SK-N-SH (cell line): ENCODE measurements at regions of chr13 and their contacts with region 1.

Region 1: GRCh38 chr13:40777166-40777808 is 6.3 kb upstream of the MRPS31 start:
- DNase-seq: peak; percentile 60
- H3K4me3 ChIP-seq: peak overlapping the region; percentile 24 to 48
- H3K27ac ChIP-seq: peak overlapping the region; percentile 40 to 63; a peak in 3 of 4 replicates
- H3K4me1 ChIP-seq: peaks cover 3 to 8% of the 10 kb centered on the region in 2 experiments; a peak in 1 of 4 replicates
- H3K27me3 ChIP-seq: no peaks in the 10 kb centered on the region
- CTCF ChIP-seq: peak; percentile 82
- EP300 ChIP-seq: no peak
- RAD21 ChIP-seq: peak; percentile 71

Region 2: GRCh38 chr13:39684531-39685137 is 1092.7 kb before region 1 on chr13:
- CTCF ChIA-PET with region 1: interaction called, 17 read pairs
- POLR2A ChIA-PET with region 1: no interaction called
- DNase-seq: peak; percentile 23
- H3K4me3 ChIP-seq: no peak overlapping the region
- H3K27ac ChIP-seq: no peak overlapping the region
- H3K4me1 ChIP-seq: no peaks in the 10 kb centered on the region; a peak in 1 of 4 replicates
- H3K27me3 ChIP-seq: no peaks in the 10 kb centered on the region
- CTCF ChIP-seq: peak; percentile 67
- EP300 ChIP-seq: no peak
- RAD21 ChIP-seq: peak; percentile 52

Region 3: DNA sequence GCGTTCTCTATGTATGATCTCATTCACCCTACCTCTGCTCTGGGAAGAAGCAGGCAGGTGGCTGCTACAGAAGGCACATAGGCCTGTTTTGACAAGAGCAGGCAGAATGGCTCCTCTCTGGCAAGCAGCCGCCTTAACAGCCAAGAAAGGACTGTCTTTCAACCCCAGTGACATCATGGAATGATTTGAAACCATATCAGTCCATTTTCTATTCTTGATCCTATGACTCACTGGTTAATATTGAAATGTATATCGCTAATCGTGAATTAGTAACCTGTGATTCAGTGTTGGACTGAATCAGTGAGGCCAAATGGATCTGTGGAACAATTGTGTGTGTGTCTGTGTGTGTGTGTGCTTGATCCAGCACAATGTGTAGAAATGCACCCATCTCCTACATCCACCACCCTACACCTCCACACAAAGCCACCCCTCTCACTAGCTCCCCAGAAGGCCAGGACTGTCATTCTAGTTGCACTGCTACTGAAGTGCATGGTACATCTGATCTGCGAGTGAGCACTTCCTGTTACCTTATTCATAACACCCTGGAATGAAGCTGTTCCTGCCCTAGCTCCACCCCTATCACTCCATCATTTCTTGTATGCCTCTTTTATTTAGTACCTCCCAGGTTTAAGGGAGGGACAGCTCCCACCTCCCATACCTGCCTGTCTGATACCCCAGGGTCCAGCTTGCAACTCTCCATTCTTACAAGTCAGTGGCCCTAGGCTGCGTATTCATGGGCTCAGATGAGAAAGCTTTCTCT is 570.9 kb before region 1 on chr13:
- CTCF ChIA-PET with region 1: no interaction called
- POLR2A ChIA-PET with region 1: no interaction called
- DNase-seq: no peak
- H3K4me3 ChIP-seq: no peak overlapping the region
- H3K27ac ChIP-seq: peak overlapping the region in 1 of 2 experiments; percentile 30; a peak in 1 of 4 replicates
- H3K4me1 ChIP-seq: peaks cover 7 to 8% of the 10 kb centered on the region in 2 experiments; a peak in 2 of 4 replicates
- H3K27me3 ChIP-seq: no peaks in the 10 kb centered on the region
- CTCF ChIP-seq: no peak
- EP300 ChIP-seq: no peak; a peak in 1 of 4 replicates
- RAD21 ChIP-seq: no peak

Region 4: DNA sequence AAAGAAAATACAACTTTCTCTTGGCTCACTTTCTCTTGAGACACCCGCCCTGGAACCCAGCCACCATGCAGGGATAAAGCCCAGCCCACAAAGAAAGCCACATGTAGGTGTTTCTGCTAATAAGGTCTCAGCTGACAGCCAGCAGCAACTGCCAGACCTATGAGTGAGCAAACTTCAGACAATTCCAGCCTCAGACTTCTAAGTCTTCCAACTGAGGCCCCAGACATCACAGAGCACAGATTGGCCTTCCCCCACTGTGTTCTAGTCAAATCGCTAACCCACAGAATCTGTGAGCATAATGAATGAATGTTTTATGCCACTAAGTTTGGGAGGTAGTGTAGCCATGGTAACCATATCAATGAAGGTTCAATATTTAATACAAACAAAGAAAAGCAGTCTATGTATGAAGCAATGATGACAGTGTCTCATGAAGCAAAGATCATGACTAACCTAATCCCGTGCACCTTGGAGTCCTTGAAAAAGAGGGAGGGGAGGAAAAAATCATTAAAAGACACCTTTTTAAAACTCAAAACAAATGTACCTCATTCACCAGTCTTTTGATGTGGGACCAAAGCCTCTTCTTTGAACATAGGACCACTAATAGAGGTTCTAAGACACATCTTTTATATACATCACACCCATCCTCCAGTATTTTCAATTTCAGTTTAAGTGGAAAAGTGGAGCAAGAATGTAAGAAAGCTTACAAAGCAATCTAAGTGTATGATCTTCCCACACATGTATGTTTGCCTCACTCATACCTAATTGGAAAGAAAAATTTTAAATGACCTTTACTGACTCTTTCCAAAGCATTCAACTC is 12.5 kb before region 1 on chr13:
- CTCF ChIA-PET with region 1: interaction called, 11 read pairs
- POLR2A ChIA-PET with region 1: no interaction called
- DNase-seq: no peak
- H3K4me3 ChIP-seq: no peak overlapping the region
- H3K27ac ChIP-seq: no peak overlapping the region
- H3K4me1 ChIP-seq: peaks cover 2 to 7% of the 10 kb centered on the region in 2 experiments; a peak in 2 of 4 replicates
- H3K27me3 ChIP-seq: no peaks in the 10 kb centered on the region
- CTCF ChIP-seq: no peak
- EP300 ChIP-seq: no peak
- RAD21 ChIP-seq: no peak

Region 5: GRCh38 chr13:40789275-40790133 is 12.2 kb after region 1 on chr13 and contains the start of gene SLC25A15:
- CTCF ChIA-PET with region 1: interaction called, 14 read pairs
- POLR2A ChIA-PET with region 1: interaction called, 3 read pairs
- DNase-seq: peak; percentile 97
- H3K4me3 ChIP-seq: peak within 1 kb of the TSS; percentile 70 to 83
- H3K27ac ChIP-seq: peak within 1 kb of the TSS; percentile 83 to 85
- H3K4me1 ChIP-seq: peaks cover 0 to 11% of the 10 kb centered on the region in 2 experiments; a peak in 1 of 4 replicates
- H3K27me3 ChIP-seq: no peaks in the 10 kb centered on the region
- CTCF ChIP-seq: no peak; the same call in 1 of the 2 replicates
- EP300 ChIP-seq: no peak
- RAD21 ChIP-seq: peak; percentile 60
- polyA plus RNA-seq, gene SLC25A15: 15.2 TPM in 2 replicates

Region 6: DNA sequence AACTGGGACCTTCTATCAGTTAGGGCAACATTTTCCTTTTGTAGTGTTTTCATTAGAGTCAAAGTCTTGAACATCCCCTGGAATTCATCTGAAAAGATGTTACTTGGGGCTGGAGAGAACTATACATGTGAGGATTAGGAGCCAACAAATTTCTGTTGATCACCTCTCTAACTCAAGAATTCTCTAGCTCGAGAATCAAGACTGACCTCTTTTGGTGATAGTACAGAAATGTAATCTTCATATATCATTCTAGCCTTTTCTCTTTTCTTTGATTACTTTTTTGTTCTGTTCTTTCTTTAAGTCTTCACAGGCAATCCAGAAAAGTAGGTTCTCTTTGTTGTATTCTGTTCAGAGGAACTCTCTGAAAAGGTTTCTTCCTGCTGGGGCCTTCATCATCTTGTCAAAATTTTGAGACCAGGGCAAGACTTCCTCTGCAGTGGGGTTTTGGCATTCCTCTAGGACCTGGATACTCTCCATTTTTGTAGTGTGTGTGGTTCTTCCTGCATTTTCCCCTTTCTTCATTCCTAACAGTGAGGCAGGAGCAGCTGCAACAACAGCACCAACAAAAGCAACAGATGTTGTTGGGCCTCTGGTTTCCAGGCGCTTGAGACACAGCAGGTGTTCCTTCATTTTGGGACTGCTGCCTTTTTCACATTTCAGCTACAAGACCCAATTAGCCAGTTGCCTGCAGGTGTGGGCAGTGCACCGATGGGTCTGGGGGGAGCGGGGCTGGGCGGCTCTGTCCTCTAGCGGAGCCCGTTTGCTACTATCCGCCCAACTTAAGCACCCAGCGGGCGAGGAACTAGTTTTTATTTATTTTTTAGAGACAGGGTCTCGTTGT is 215.6 kb after region 1 on chr13:
- CTCF ChIA-PET with region 1: interaction called, 60 read pairs
- POLR2A ChIA-PET with region 1: no interaction called
- DNase-seq: peak; percentile 30
- H3K4me3 ChIP-seq: no peak overlapping the region
- H3K27ac ChIP-seq: no peak overlapping the region
- H3K4me1 ChIP-seq: no peaks in the 10 kb centered on the region; a peak in 2 of 4 replicates
- H3K27me3 ChIP-seq: no peaks in the 10 kb centered on the region
- CTCF ChIP-seq: peak; percentile 33; the same call in 1 of the 2 replicates
- EP300 ChIP-seq: no peak
- RAD21 ChIP-seq: peak; percentile 74

Region 7: DNA sequence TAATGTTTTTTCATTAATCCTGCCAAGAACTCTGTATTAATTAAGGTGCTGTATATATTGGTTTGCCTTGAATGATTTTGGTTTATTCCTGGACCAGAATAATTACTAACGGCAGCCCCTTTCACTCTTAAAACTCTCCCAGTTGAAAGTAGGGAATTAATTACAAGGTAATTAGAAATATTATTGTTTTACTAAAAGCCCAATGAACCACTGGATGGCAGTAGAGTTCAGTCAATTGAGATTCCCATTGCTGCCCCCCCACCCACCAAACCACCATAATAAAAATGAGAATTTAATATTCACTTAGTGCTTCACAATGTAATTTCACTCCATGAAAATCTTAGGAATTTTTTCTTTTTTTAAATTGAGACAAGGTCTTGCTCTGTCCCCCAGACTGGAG is 297.7 kb after region 1 on chr13:
- CTCF ChIA-PET with region 1: no interaction called
- POLR2A ChIA-PET with region 1: no interaction called
- DNase-seq: peak; percentile 66
- H3K4me3 ChIP-seq: no peak overlapping the region
- H3K27ac ChIP-seq: no peak overlapping the region
- H3K4me1 ChIP-seq: no peaks in the 10 kb centered on the region
- H3K27me3 ChIP-seq: no peaks in the 10 kb centered on the region
- CTCF ChIP-seq: peak; percentile 75
- EP300 ChIP-seq: no peak
- RAD21 ChIP-seq: peak; percentile 84